ENCODE measurements at regions of chr9 and their contacts with region 1.

Region 1: GRCh38 chr9:110911659-110912418 is 126.4 kb downstream of the LPAR1 start:
- DNase-seq: peak; percentile 37
- H3K4me3 ChIP-seq: no peak overlapping the region
- H3K27ac ChIP-seq: no peak overlapping the region
- H3K4me1 ChIP-seq: no peaks in the 10 kb centered on the region
- H3K27me3 ChIP-seq: no peaks in the 10 kb centered on the region
- CTCF ChIP-seq: no peak

Region 2: GRCh38 chr9:110700953-110701352 is 210.9 kb before region 1 on chr9:
- CTCF ChIA-PET with region 1: interaction called, 11 read pairs
- dilution Hi-C with region 1: no loop called
- in situ Hi-C with region 1: no loop called
- intact Hi-C with region 1: no loop called
- DNase-seq: no peak
- H3K4me3 ChIP-seq: no peak overlapping the region
- H3K27ac ChIP-seq: no peak overlapping the region
- H3K4me1 ChIP-seq: no peaks in the 10 kb centered on the region
- H3K27me3 ChIP-seq: no peaks in the 10 kb centered on the region
- CTCF ChIP-seq: no peak

Region 3: GRCh38 chr9:110847671-110848070 is 64.2 kb before region 1 on chr9:
- CTCF ChIA-PET with region 1: no interaction called
- dilution Hi-C with region 1: loop called (anchors 5 kb)
- in situ Hi-C with region 1: no loop called
- intact Hi-C with region 1: no loop called
- DNase-seq: no peak
- H3K4me3 ChIP-seq: no peak overlapping the region
- H3K27ac ChIP-seq: no peak overlapping the region
- H3K4me1 ChIP-seq: no peaks in the 10 kb centered on the region
- H3K27me3 ChIP-seq: no peaks in the 10 kb centered on the region
- CTCF ChIP-seq: no peak

Region 4: DNA sequence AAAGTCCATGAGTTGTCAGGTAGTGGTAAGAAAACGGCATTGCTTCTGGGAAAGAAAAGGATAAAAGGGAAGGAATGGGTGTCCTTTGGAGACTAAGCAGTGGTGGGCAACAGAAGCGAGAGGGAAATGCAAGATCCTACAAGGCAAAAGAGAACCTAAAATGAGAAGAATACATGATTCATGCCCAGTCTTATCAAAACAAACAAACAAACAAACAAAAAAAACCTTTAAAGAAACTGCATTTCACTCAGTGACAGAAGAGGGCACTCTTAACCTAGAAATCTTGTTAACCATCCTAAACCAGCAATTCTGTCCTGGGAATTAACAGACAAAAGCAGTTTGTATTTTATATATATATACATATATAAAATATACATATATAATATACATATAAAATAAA is 1174.8 kb after region 1 on chr9:
- CTCF ChIA-PET with region 1: no interaction called
- dilution Hi-C with region 1: no loop called
- in situ Hi-C with region 1: no loop called
- intact Hi-C with region 1: no loop called
- DNase-seq: no peak
- H3K4me3 ChIP-seq: no peak overlapping the region
- H3K27ac ChIP-seq: no peak overlapping the region
- H3K4me1 ChIP-seq: no peaks in the 10 kb centered on the region
- H3K27me3 ChIP-seq: no peaks in the 10 kb centered on the region
- CTCF ChIP-seq: peak; percentile 41 to 48